ENCODE measurements at regions of chr12 and their contacts with region 1.

Region 1: DNA sequence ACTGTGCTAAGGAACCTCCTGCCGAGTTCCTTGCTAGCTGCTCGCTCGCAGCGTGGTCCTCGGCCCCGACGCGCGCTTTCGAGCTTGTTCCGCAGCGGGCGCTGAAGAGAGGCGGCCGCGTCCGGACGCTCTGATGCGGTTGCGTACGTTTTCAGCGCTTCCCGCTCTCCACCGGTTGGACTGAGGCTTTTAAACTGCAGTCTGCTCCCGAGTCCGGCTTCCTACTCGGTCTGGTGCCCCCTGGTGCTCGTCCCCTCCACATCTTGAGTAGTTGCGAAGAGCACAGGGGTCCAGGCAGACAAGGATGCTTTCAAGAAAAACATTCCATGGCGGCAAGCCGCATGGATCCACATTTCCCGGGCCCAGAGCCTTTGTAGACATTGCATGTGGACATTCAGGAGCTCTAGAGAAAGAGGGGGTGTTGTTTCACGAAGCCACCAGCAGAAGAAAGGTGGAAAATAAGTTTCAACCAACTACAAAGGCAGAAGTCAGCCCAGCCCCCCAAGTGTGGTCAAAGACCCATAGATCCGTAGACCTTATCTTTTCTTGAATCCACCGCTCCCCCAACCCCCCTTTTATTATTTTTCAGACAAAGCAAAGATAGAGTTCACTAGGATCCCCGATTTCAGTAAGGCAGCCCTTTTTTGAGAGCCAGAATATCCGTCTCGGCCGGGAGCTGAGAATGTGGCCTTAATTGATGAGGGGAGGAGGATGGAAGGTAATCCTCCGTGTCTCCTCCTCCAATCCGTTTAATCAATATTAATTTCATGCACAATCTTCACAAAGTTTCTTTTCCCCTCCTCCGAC is 984 bp upstream of the WNK1 start:
- DNase-seq: peak; percentile 93 to 96 (median 95)
- ATAC-seq: peak; percentile 67 to 79 (median 70)
- H3K4me3 ChIP-seq: peak overlapping the region; percentile 15 to 97 (median 84)
- H3K27ac ChIP-seq: peak overlapping the region; percentile 39 to 99 (median 98)
- H3K4me1 ChIP-seq: peaks cover 0 to 48% (median 23%) of the 10 kb centered on the region in 12 donors
- H3K27me3 ChIP-seq: no peaks in the 10 kb centered on the region
- CTCF ChIP-seq: peak; percentile 62 to 92 (median 78)
- POLR2A ChIP-seq: peak in 1 of 2 donors; percentile 69

Region 2: DNA sequence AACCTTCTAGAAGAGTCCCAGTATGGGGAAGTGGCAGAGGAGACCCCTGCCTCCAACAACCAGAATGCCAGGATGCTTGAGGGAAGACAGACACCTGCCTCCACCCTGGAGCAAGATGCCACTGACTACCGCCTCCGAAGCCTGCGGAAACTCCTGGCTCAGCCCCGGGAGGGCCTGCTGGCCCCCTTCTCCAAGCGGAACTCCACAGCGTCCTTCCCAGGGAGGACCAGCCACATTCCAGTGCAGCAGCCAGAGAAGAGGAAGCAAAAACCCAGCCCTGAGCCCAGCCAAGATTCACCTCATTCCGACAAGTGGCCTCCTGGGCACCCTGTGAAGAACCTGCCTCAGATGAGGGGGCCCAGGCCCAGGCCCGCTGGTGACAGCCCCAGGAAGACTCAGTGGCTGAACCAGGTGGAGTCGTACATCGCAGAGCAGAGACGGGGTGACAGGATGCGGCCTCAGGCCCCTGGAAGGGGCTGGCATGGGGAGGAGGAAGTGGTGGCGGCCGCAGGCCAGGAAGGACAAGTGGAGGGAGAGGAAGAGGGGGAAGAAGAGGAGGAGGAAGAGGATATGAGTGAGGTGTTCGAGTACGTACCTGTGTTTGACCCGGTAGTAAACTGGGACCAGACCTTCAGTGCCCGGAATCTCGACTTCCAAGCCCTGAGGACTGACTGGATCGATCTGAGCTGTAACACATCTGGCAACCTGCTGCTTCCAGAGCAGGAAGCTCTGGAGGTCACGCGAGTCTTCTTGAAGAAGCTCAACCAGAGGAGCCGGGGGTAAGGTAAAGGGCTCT is 198.0 kb before region 1 on chr12:
- intact Hi-C with region 1: no loop called
- DNase-seq: peak in 2 of 5 donors; percentile 30 to 76
- ATAC-seq: no peak
- H3K4me3 ChIP-seq: peak overlapping the region in 3 of 12 donors; percentile 7 to 35 (median 17)
- H3K27ac ChIP-seq: peak overlapping the region in 9 of 12 donors; percentile 13 to 83 (median 49)
- H3K4me1 ChIP-seq: peaks cover 0 to 54% (median 29%) of the 10 kb centered on the region in 12 donors
- H3K27me3 ChIP-seq: no peaks in the 10 kb centered on the region
- CTCF ChIP-seq: no peak
- POLR2A ChIP-seq: no peak

Region 3: GRCh38 chr12:591167-592023 is 160.0 kb before region 1 on chr12:
- intact Hi-C with region 1: loop called in 1 of 10 experiments (anchors 5 kb)
- DNase-seq: peak; percentile 86 to 97 (median 91)
- ATAC-seq: peak; percentile 91 to 93 (median 92)
- H3K4me3 ChIP-seq: peak overlapping the region in 1 of 12 donors; percentile 0
- H3K27ac ChIP-seq: peak overlapping the region; percentile 39 to 90 (median 86)
- H3K4me1 ChIP-seq: peaks cover 0 to 32% (median 20%) of the 10 kb centered on the region in 12 donors
- H3K27me3 ChIP-seq: no peaks in the 10 kb centered on the region
- CTCF ChIP-seq: peak in 8 of 12 donors; percentile 14 to 61 (median 30)
- POLR2A ChIP-seq: no peak

Region 4: DNA sequence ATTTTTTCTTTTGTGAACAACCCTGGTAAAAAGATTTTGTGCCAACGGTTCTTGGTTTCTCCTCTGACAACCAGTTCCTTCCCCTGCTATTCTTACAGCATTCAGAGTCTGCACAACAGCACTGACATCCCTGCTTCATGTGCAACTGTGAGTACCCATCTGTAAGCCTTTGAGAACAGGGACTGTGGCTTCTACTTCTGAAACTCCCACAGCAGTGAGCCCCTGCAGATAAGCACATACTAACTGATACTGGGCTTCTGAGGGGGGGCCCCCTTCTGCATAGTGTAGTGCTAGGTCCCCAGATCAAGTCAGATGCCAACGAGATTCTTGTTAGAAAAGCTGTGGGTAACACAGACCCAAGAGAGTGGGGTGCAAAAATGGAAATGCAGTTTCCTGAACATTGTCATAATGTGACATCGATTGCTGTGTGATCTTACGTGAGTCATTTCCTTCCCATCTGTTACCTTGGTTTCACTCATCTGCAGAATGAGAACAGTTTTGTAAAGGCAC is 77.1 kb before region 1 on chr12:
- intact Hi-C with region 1: loop called in 1 of 10 experiments (anchors 10 kb)
- DNase-seq: no peak
- ATAC-seq: peak in 2 of 4 donors; percentile 44 to 45
- H3K4me3 ChIP-seq: no peak overlapping the region
- H3K27ac ChIP-seq: peak overlapping the region in 1 of 12 donors; percentile 78
- H3K4me1 ChIP-seq: peaks cover 0 to 16% (median 0%) of the 10 kb centered on the region in 12 donors
- H3K27me3 ChIP-seq: no peaks in the 10 kb centered on the region
- CTCF ChIP-seq: no peak
- POLR2A ChIP-seq: no peak

Region 5: GRCh38 chr12:718756-719102 is 32.7 kb before region 1 on chr12:
- intact Hi-C with region 1: loop called in 2 of 10 experiments (anchors 1 to 5 kb)
- DNase-seq: no peak
- ATAC-seq: no peak
- H3K4me3 ChIP-seq: peak overlapping the region in 5 of 12 donors; percentile 8 to 16 (median 13)
- H3K27ac ChIP-seq: peak overlapping the region; percentile 69 to 97 (median 86)
- H3K4me1 ChIP-seq: peaks cover 0 to 27% (median 7%) of the 10 kb centered on the region in 12 donors
- H3K27me3 ChIP-seq: no peaks in the 10 kb centered on the region
- CTCF ChIP-seq: no peak
- POLR2A ChIP-seq: no peak

Region 6: GRCh38 chr12:774051-774614 is 22.7 kb after region 1 on chr12:
- intact Hi-C with region 1: no loop called
- DNase-seq: no peak
- ATAC-seq: peak in 1 of 4 donors; percentile 27
- H3K4me3 ChIP-seq: no peak overlapping the region
- H3K27ac ChIP-seq: peak overlapping the region in 6 of 12 donors; percentile 8 to 56 (median 40)
- H3K4me1 ChIP-seq: peaks cover 2 to 96% (median 59%) of the 10 kb centered on the region in 12 donors
- H3K27me3 ChIP-seq: no peaks in the 10 kb centered on the region
- CTCF ChIP-seq: no peak
- POLR2A ChIP-seq: no peak

Region 7: GRCh38 chr12:823028-823698 is 71.8 kb after region 1 on chr12:
- intact Hi-C with region 1: loop called in 1 of 10 experiments (anchors 5 kb)
- DNase-seq: no peak
- ATAC-seq: no peak
- H3K4me3 ChIP-seq: no peak overlapping the region
- H3K27ac ChIP-seq: peak overlapping the region in 1 of 12 donors; percentile 47
- H3K4me1 ChIP-seq: peaks cover 0 to 40% (median 16%) of the 10 kb centered on the region in 12 donors
- H3K27me3 ChIP-seq: no peaks in the 10 kb centered on the region
- CTCF ChIP-seq: no peak
- POLR2A ChIP-seq: no peak